Caco-2 (cell line): ENCODE measurements at regions of chr5 and their contacts with region 1.

Region 1: DNA sequence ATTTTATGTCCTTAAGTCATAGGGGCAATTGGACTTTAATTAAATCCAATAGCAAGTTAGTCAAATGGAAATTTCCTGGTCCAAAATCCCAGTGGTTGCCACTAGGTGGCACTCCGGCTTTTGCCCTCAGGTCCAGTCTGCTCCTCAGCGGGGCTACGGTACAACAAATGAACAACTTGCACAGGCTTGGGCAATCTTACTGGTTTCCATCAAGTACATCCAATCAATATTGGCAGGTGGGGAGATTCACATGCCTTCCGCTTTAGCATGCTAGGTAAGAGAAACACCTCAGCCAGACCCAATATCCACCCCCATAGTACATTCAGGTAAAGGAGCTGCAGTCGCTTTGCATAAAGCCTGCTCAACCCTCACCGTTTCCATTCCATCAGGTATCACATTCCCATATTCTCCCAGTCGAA is 6.3 kb upstream of the MXD3 start:
- DNase-seq: peak; percentile 83 to 84
- H3K4me3 ChIP-seq: no peak overlapping the region
- H3K4me3 Mint-ChIP-seq: no peak overlapping the region
- H3K27ac Mint-ChIP-seq: peak overlapping the region; percentile 42
- H3K4me1 ChIP-seq: no peaks in the 10 kb centered on the region
- H3K4me1 Mint-ChIP-seq: peaks cover 10% of the 10 kb centered on the region
- H3K27me3 ChIP-seq: no peaks in the 10 kb centered on the region
- H3K27me3 Mint-ChIP-seq: no peaks in the 10 kb centered on the region
- CTCF ChIP-seq: peak; percentile 92 to 93

Region 2: GRCh38 chr5:177276886-177277285 is 41.1 kb before region 1 on chr5:
- CTCF ChIA-PET with region 1: no interaction called
- POLR2A ChIA-PET with region 1: no interaction called
- intact Hi-C with region 1: no loop called
- DNase-seq: no peak
- H3K4me3 ChIP-seq: no peak overlapping the region
- H3K4me3 Mint-ChIP-seq: no peak overlapping the region
- H3K27ac Mint-ChIP-seq: no peak overlapping the region
- H3K4me1 ChIP-seq: no peaks in the 10 kb centered on the region
- H3K4me1 Mint-ChIP-seq: no peaks in the 10 kb centered on the region
- H3K27me3 ChIP-seq: no peaks in the 10 kb centered on the region
- H3K27me3 Mint-ChIP-seq: no peaks in the 10 kb centered on the region
- CTCF ChIP-seq: no peak

Region 3: DNA sequence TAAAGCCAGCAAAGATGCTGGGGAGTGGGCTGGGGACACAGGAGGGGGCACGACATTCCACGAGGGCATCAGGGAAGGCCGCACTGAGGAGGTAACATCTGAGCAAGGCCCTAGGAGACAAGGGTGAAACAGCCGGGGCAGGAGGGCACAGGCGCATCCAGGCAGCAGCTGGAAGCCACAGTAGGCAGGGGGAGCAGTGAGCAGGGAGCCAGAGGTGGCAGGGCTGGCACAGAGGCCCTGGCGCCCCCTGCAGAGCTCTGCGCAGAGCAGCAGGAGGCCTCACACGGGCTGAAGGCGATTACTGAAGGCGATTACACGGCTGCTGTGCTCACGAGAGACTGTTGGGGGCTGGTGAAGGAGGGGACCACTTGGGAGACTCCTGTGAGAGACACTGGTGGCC is 18.1 kb after region 1 on chr5:
- CTCF ChIA-PET with region 1: interaction called, 5 read pairs
- POLR2A ChIA-PET with region 1: no interaction called
- intact Hi-C with region 1: loop called (anchors 1 kb)
- DNase-seq: peak in 1 of 2 experiments; percentile 65
- H3K4me3 ChIP-seq: no peak overlapping the region
- H3K4me3 Mint-ChIP-seq: no peak overlapping the region
- H3K27ac Mint-ChIP-seq: peak overlapping the region; percentile 41
- H3K4me1 ChIP-seq: no peaks in the 10 kb centered on the region
- H3K4me1 Mint-ChIP-seq: peaks cover 7% of the 10 kb centered on the region
- H3K27me3 ChIP-seq: no peaks in the 10 kb centered on the region
- H3K27me3 Mint-ChIP-seq: no peaks in the 10 kb centered on the region
- CTCF ChIP-seq: peak; percentile 53 to 71

Region 4: GRCh38 chr5:177390363-177391300 is 72.7 kb after region 1 on chr5:
- CTCF ChIA-PET with region 1: interaction called, 3 read pairs
- POLR2A ChIA-PET with region 1: no interaction called
- intact Hi-C with region 1: loop called (anchors 1 kb)
- DNase-seq: peak; percentile 89 to 92
- H3K4me3 ChIP-seq: no peak overlapping the region
- H3K4me3 Mint-ChIP-seq: peak overlapping the region; percentile 43
- H3K27ac Mint-ChIP-seq: peak overlapping the region; percentile 53
- H3K4me1 ChIP-seq: peaks cover 22% of the 10 kb centered on the region
- H3K4me1 Mint-ChIP-seq: peaks cover 16% of the 10 kb centered on the region
- H3K27me3 ChIP-seq: no peaks in the 10 kb centered on the region
- H3K27me3 Mint-ChIP-seq: peaks cover 3% of the 10 kb centered on the region
- CTCF ChIP-seq: peak; percentile 92 to 98